Esophagus muscularis mucosa (tissue), 4 donors: ENCODE measurements at regions of chr2 and their contacts with region 1.

Region 1: DNA sequence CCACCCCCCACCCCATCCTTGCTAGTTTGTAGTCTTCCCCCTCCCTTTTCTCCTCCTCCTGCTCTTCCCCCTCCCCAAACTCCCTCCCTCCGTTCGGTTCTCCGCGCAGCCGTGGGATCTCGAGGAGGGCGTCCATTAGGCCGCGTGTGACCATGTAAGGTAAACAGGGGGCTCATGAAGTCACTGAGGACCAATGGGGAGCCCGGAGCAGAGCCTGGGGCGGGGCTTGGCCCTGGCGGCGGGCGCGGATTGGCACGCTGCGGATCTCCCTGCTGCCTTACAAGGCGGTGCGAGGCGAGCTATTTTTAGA is 246 bp upstream of the KLF7 start:
- DNase-seq: peak; percentile 100
- H3K4me3 ChIP-seq: peak overlapping the region; percentile 78 to 90 (median 82)
- H3K27ac ChIP-seq: peak overlapping the region; percentile 100
- H3K4me1 ChIP-seq: peaks cover 32 to 42% (median 40%) of the 10 kb centered on the region in 4 donors
- H3K27me3 ChIP-seq: no peaks in the 10 kb centered on the region
- CTCF ChIP-seq: no peak
- EP300 ChIP-seq: no peak
- POLR2A ChIP-seq: no peak

Region 2: DNA sequence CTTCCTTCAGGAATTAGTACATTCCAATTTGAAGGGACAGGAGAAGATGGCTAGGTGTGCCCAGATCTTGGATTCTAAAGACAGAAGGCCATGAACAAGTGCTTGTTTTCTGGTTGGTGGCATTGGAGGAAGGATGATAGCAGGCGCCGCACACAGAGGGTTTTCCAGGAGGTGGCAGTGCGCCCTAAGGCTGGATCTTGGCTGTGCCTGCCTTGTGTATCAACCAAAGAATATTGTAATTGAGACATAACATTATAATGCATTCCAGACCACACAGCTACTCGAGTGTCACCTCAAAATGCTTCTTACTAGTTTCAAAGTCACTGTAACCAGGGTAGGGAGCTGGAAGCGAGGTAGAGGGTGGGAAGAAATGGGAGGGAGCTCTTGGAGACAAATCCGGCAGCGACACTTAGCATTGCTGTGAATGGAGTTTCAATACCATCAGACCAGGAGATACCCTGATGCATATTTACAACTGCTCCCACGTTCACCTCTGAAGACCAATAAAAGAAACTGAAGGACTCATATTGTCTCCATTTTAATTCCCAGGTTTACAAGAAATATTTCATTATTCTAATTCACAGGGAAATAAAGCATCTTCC is 184.2 kb before region 1 on chr2:
- intact Hi-C with region 1: loop called (anchors 5 kb)
- DNase-seq: peak; percentile 92
- H3K4me3 ChIP-seq: peak overlapping the region in 1 of 4 donors; percentile 18
- H3K27ac ChIP-seq: no peak overlapping the region
- H3K4me1 ChIP-seq: peaks cover 23 to 36% (median 29%) of the 10 kb centered on the region in 4 donors
- H3K27me3 ChIP-seq: no peaks in the 10 kb centered on the region
- CTCF ChIP-seq: peak; percentile 81 to 87 (median 85)
- EP300 ChIP-seq: no peak
- POLR2A ChIP-seq: no peak

Region 3: DNA sequence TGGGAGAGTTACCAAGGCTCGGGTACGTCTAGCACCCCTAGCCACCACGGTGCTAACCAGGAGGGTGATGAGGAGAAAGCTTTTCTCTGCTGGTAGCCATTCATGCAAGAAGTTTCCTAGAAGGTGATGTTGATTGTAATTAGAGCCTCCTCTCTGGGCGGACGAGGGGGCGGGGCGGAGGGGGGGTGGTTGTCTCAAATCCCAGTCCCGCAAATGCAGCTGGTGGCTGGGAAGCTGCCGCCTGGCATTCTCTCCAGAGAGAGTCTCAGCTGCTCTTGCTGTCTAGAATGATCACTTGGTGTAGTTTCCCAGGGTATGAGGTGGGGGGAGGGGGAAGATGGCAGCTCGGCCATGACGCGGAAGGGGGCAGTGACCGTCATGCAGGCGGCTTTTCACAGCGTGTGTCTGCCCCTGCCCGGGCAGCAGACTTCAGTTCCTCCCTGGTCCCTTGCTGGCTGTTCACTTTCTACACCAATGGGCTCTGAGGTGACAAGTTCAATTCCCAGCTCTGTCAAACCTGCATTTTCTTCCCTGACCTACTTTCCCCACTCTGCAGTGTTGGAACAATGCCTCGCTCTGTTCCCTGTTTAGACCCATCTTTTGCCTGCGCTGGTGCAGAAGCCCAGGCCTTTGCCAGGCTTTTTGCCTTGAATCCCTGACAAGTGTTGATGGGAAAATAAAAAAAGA is 61.2 kb after region 1 on chr2:
- intact Hi-C with region 1: loop called (anchors 5 kb)
- DNase-seq: peak; percentile 87
- H3K4me3 ChIP-seq: peak overlapping the region; percentile 30 to 48 (median 37)
- H3K27ac ChIP-seq: peak overlapping the region; percentile 70 to 83 (median 76)
- H3K4me1 ChIP-seq: peaks cover 45 to 62% (median 49%) of the 10 kb centered on the region in 4 donors
- H3K27me3 ChIP-seq: no peaks in the 10 kb centered on the region
- CTCF ChIP-seq: no peak
- EP300 ChIP-seq: no peak
- POLR2A ChIP-seq: no peak

Region 4: DNA sequence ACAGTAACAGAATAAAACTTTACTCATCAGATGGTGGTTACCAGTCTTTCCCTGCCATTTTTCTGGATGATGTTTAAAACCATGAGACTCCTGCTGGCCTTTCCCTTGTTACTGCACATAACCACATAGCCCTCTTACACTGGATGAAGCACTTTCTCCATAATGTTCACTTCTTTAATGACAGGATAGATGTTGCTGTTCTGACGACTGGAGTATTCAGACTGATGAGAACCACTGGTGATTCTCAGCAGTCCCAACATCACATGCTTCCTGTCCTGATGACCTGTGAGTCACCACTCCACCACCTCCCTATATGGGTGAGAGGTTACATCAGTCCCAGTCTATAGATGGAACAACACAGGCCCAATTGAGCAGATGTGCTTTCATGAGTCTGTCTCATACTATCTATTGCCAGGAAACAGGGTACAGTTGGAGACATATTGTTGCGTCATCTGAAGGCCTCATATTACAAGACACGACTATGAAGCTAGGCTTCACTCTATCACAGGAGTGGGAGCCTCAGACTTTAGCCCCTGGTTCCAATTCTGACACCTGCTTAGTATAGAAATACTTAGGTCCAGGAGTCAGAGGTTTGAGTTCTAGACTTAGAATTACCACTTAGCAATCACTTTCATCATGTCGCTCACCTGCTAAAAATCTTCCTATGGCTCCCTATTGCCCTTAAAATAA is 145.5 kb after region 1 on chr2:
- intact Hi-C with region 1: loop called (anchors 5 kb)
- DNase-seq: no peak
- H3K4me3 ChIP-seq: no peak overlapping the region
- H3K27ac ChIP-seq: peak overlapping the region in 3 of 4 donors; percentile 33 to 79 (median 78)
- H3K4me1 ChIP-seq: peaks cover 19 to 29% (median 25%) of the 10 kb centered on the region in 4 donors
- H3K27me3 ChIP-seq: no peaks in the 10 kb centered on the region
- CTCF ChIP-seq: peak in 2 of 3 experiments; percentile 16 to 24
- EP300 ChIP-seq: peak; percentile 82
- POLR2A ChIP-seq: no peak

Region 5: GRCh38 chr2:207473049-207473930 is 307.3 kb after region 1 on chr2:
- intact Hi-C with region 1: loop called (anchors 2 kb)
- DNase-seq: no peak
- H3K4me3 ChIP-seq: peak overlapping the region; percentile 16 to 35 (median 28)
- H3K27ac ChIP-seq: peak overlapping the region; percentile 35 to 70 (median 62)
- H3K4me1 ChIP-seq: peaks cover 16 to 35% (median 28%) of the 10 kb centered on the region in 4 donors
- H3K27me3 ChIP-seq: no peaks in the 10 kb centered on the region
- CTCF ChIP-seq: peak; percentile 65 to 76 (median 72)
- EP300 ChIP-seq: no peak
- POLR2A ChIP-seq: no peak